ENCODE measurements at regions of chr9 and their contacts with region 1.

Region 1: DNA sequence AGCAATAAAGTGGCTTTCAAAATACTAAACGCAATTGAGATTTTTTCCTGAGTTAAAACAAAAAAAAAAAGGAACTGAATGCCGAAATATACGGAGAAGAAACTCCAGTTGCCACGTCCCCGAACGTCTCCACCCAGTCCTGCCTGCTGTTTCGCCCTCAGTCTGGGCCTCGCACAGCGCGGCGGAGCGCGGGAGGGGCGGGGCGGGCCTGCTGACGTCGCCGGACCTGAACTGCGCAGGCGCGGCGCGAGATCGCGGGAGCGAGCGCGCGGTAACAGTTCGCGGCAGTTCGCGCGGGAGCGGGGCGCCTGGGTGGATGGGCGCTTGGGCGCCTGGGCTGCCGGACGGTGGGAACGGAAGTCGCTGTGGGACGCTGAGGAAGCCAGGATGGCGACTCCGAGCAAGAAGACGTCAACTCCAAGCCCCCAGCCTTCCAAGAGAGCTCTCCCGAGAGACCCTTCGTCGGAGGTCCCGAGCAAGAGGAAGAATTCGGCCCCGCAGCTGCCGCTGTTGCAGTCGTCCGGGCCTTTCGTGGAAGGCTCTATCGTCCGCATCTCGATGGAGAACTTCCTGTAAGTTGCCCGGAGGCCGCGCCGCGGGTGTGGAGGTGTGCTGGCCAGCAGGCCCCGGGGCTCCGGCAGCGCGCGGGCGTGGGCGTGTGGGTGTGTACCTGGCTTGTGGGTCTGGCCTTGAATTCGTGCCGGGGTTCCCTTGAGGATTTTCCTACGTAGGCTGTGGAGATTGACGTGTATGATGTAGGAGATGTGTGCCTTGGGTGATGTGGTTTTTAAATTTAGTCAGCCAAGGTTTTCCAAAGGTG is at the start of gene SMC5:
- DNase-seq: peak; percentile 90
- H3K4me3 Mint-ChIP-seq: peak within 1 kb of the TSS; percentile 97
- H3K27ac Mint-ChIP-seq: peak within 1 kb of the TSS; percentile 99
- H3K4me1 Mint-ChIP-seq: peaks cover 63% of the 10 kb centered on the region
- H3K27me3 Mint-ChIP-seq: no peaks in the 10 kb centered on the region
- CTCF ChIP-seq: no peak
- total RNA-seq, gene SMC5: 29.8 and 31.9 TPM in 2 replicates

Region 2: DNA sequence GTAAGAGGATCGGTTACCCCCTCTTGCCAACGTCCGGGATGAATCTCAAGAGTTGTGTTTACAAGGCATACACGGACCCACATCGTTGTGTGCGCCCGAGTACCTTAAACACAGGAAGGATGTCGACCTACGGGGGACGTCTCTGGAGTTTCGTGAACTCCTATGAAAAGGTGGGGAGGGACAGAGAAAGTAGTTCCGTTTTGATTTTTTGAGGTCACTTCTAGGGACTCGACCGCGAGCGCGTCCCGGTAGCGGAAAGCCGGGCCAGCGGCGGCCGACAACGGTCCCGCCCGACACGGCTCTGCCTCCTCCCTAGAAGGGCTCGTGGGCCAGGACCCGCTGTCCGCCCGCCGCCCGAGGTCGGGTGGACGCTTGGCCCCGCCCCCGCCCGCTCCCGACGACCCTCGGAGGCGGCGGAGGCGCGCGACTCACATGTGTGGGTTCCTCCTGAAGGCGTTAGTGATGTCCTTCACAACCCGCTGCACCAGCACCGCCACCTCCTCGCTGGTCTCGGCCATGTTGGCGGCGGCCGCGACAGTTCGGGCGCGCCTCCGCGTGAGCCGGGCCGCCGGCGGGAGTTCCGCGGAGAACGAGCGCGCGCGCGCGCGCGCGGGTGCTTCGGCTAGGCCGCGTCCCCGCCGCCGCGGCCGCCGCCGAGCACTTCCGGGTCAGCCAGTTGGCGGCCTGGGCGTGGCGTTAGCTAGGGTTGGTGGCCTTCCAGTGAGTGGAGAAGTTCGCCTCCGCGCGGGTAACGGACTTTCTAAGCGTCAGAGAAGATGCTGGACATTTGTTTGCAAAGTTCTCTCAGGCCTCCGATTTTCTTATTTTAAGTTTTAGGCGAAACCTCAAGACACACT is 499.3 kb before region 1 on chr9 and contains the start of gene PTAR1:
- CTCF ChIA-PET with region 1: no interaction called
- POLR2A ChIA-PET with region 1: interaction called, 18 read pairs
- intact Hi-C with region 1: loop called (anchors 10 kb)
- DNase-seq: peak; percentile 89
- H3K4me3 Mint-ChIP-seq: peak within 1 kb of the TSS; percentile 89
- H3K27ac Mint-ChIP-seq: peak within 1 kb of the TSS; percentile 73
- H3K4me1 Mint-ChIP-seq: peaks cover 6% of the 10 kb centered on the region
- H3K27me3 Mint-ChIP-seq: no peaks in the 10 kb centered on the region
- CTCF ChIP-seq: no peak
- total RNA-seq, gene PTAR1: 41.4 and 43.5 TPM in 2 replicates

Region 3: GRCh38 chr9:69945671-69946141 is 313.2 kb before region 1 on chr9:
- CTCF ChIA-PET with region 1: no interaction called
- POLR2A ChIA-PET with region 1: no interaction called
- intact Hi-C with region 1: loop called (anchors 1 kb)
- DNase-seq: peak; percentile 15
- H3K4me3 Mint-ChIP-seq: no peak overlapping the region
- H3K27ac Mint-ChIP-seq: peak overlapping the region; percentile 85
- H3K4me1 Mint-ChIP-seq: peaks cover 21% of the 10 kb centered on the region
- H3K27me3 Mint-ChIP-seq: no peaks in the 10 kb centered on the region
- CTCF ChIP-seq: no peak

Region 4: DNA sequence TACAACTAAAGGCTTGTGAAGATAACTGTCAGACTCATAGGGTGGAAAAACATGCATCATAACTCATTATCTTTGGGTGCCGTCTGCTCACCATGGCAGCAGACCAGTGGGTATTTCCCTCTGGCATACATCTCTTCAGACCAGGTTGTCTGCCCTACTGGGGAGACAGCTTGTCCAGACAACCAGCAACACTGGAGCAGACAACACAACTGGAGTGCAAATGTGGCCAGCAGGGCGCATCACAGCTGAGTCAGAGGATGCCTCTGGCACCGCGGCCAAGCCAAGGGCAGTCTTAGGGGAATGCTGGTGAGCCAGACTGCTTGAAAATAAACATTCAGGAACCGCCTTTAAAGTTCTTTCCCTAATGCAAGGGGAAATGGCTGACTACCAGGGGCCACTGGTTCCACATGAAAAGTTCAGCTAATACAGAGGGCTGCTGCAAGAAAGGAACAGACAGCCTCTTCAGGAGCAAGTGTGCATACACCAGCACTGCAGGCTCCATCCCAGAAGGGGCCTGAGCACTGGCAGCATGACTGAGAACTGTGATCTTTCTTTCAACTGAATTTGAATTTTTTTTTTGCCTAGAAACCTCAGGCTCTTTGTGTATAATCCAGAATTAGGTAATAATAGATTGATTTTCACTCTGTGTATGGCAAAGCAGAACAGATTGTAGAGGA is 137.9 kb before region 1 on chr9:
- CTCF ChIA-PET with region 1: interaction called, 5 read pairs
- POLR2A ChIA-PET with region 1: interaction called, 11 read pairs
- intact Hi-C with region 1: loop called (anchors 1 kb)
- DNase-seq: peak; percentile 85
- H3K4me3 Mint-ChIP-seq: no peak overlapping the region
- H3K27ac Mint-ChIP-seq: no peak overlapping the region
- H3K4me1 Mint-ChIP-seq: peaks cover 29% of the 10 kb centered on the region
- H3K27me3 Mint-ChIP-seq: no peaks in the 10 kb centered on the region
- CTCF ChIP-seq: peak; percentile 7

Region 5: GRCh38 chr9:70130272-70130671 is 128.6 kb before region 1 on chr9:
- CTCF ChIA-PET with region 1: interaction called, 4 read pairs
- POLR2A ChIA-PET with region 1: interaction called, 11 read pairs
- intact Hi-C with region 1: no loop called
- DNase-seq: no peak
- H3K4me3 Mint-ChIP-seq: no peak overlapping the region
- H3K27ac Mint-ChIP-seq: no peak overlapping the region
- H3K4me1 Mint-ChIP-seq: peaks cover 13% of the 10 kb centered on the region
- H3K27me3 Mint-ChIP-seq: no peaks in the 10 kb centered on the region
- CTCF ChIP-seq: no peak

Measured in MCF 10A (cell line).